ENCODE measurements at regions of chr3 and their contacts with region 1.

Region 1: DNA sequence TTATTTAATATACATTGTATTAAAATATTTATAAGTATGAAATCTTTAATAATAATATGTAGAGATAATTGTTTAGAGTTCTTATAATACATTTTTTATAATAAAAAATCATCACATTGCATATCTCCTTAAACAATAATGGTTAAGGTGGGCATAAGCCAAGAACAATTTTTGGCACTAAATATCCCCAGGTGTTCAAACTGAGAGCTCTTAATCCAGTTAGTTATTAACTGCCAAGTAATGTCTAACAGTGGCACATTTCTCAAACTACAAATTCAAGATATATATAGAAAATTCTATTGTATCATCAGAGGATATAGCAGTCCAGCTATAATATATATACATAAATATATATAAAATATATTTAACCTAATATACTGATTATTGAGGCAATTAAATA is 680.8 kb downstream of the SI start:
- DNase-seq: no peak
- H3K4me3 Mint-ChIP-seq: no peak overlapping the region
- H3K27ac Mint-ChIP-seq: no peak overlapping the region
- H3K4me1 Mint-ChIP-seq: no peaks in the 10 kb centered on the region
- H3K27me3 Mint-ChIP-seq: no peaks in the 10 kb centered on the region

Region 2: GRCh38 chr3:164351131-164351530 is 46.3 kb before region 1 on chr3:
- intact Hi-C with region 1: no loop called
- DNase-seq: no peak
- H3K4me3 Mint-ChIP-seq: no peak overlapping the region
- H3K27ac Mint-ChIP-seq: no peak overlapping the region
- H3K4me1 Mint-ChIP-seq: no peaks in the 10 kb centered on the region
- H3K27me3 Mint-ChIP-seq: no peaks in the 10 kb centered on the region

Region 3: DNA sequence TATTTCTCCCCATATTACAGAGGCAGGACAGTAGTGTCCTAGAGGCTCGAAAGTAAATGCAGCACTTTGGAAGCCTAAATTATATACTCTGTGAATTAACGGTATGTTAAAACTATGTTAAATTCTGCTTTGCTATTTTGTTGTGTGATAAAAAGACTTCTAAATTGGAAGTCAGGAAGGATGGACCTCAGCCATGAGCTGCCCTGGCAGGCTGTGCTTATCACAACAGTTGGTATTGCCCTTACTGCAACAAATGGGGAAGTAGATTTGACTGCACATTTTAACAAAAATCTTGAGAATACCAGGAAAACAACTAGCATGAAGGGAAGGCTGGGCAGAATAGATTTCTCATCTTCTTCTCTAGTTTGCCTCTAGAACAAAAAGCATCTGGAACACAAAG is 25.8 kb before region 1 on chr3:
- intact Hi-C with region 1: loop called (anchors 1 kb)
- DNase-seq: no peak
- H3K4me3 Mint-ChIP-seq: no peak overlapping the region
- H3K27ac Mint-ChIP-seq: no peak overlapping the region
- H3K4me1 Mint-ChIP-seq: no peaks in the 10 kb centered on the region
- H3K27me3 Mint-ChIP-seq: no peaks in the 10 kb centered on the region

Measured in activated T-helper 1 cell treated with anti-CD3 and anti-CD28 coated beads, Interleukin-12 subunit alpha, Interleukin-12 subunit beta, Interleukin-2, Interleukin-4 antibody, amounts not matched to agents 30 ng/mL and 10 ng/mL and 1 ng/mL, durations not matched to agents 14 hours and 24 hours and 36 hours (primary cell).